MCF 10A (cell line): ENCODE measurements at regions of chr12 and their contacts with region 1.

Region 1: GRCh38 chr12:94644141-94644979 is 6.0 kb downstream of the TMCC3 start:
- DNase-seq: peak; percentile 82
- H3K4me3 Mint-ChIP-seq: peak overlapping the region; percentile 62
- H3K27ac Mint-ChIP-seq: peak overlapping the region; percentile 77
- H3K4me1 Mint-ChIP-seq: peaks cover 31% of the 10 kb centered on the region
- H3K27me3 Mint-ChIP-seq: no peaks in the 10 kb centered on the region
- CTCF ChIP-seq: no peak

Region 2: DNA sequence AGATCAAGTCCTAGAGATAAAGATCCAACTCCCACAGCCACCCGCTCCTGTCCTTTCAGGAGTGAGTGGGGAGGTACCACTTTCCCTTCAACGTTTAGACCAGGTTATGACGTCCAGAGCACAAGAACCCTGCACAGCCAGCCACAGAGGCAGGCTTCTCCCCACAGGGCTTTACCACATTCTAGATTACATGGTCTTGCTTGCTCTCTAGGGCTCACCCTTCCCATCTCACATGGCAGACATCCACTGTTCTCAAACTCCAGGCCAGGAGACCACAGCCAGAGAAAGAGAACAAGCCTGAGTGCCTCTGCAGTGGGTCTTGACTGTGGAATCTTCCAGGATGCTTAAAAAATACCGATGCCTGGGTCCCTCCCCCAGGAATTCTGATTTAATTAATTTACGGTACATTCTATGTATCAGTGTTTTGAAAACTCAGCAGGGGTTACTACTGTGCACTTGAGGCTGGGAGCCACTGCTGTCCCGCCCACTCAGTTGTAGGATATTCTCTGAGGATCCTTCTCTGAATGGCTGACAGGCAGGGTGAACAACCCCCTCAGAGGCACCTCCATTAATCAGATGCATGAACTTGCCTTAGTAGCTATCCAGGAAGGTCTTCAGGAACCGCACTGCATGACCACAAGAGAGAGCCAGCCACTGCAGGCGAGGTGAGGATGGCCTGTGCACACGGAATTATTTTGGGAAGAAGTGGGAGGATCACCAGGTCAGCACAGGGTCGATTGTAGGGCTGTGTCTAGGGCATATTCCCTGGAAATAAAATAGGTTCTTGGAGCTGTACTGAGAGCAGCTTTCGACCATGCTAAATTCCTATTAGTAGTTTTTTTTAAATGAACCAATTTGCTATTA is 1093.4 kb before region 1 on chr12:
- CTCF ChIA-PET with region 1: no interaction called
- POLR2A ChIA-PET with region 1: no interaction called
- intact Hi-C with region 1: no loop called
- DNase-seq: no peak
- H3K4me3 Mint-ChIP-seq: no peak overlapping the region
- H3K27ac Mint-ChIP-seq: no peak overlapping the region
- H3K4me1 Mint-ChIP-seq: no peaks in the 10 kb centered on the region
- H3K27me3 Mint-ChIP-seq: no peaks in the 10 kb centered on the region
- CTCF ChIP-seq: no peak

Region 3: DNA sequence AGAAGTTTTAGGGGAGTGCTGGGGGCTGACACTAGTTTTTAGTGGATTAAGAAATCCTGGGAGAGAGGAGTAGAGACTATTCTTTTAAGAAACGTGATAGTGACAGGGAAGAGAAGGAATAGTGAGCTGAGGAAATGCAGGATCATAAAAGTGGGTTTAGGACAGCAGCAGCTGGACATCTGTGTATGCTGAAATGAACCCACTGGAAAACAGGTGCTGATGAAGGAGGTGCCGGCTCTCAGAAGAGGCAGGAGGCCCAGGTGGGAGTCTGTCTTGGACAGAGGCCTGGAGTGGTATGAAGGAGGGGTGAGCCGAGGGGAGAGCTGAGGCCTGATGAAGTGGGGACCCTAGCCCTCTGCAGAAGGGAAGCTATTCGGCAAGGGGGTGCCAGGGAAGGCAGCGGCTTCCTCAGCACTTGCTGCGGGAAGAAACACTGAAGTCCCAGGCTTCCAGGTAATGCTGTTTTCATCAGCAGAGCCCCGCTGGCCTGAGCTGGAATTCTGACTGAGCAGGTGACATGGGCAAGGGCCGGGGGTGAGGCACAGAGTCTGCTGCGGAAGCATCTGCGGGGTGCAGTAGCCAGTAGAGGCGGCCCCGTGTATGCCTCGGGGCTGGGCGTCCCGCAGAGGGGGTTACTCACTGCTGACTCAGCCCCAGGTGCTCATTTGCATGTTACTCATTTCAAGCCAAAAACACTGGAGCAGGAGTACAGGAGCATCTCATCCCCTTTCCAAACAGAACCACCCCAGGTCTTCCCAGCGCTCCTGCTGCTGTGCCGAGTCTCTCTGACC is 83.7 kb before region 1 on chr12:
- CTCF ChIA-PET with region 1: no interaction called
- POLR2A ChIA-PET with region 1: interaction called, 6 read pairs
- intact Hi-C with region 1: loop called (anchors 2 kb)
- DNase-seq: peak; percentile 93
- H3K4me3 Mint-ChIP-seq: peak overlapping the region; percentile 47
- H3K27ac Mint-ChIP-seq: peak overlapping the region; percentile 90
- H3K4me1 Mint-ChIP-seq: peaks cover 26% of the 10 kb centered on the region
- H3K27me3 Mint-ChIP-seq: no peaks in the 10 kb centered on the region
- CTCF ChIP-seq: no peak

Region 4: DNA sequence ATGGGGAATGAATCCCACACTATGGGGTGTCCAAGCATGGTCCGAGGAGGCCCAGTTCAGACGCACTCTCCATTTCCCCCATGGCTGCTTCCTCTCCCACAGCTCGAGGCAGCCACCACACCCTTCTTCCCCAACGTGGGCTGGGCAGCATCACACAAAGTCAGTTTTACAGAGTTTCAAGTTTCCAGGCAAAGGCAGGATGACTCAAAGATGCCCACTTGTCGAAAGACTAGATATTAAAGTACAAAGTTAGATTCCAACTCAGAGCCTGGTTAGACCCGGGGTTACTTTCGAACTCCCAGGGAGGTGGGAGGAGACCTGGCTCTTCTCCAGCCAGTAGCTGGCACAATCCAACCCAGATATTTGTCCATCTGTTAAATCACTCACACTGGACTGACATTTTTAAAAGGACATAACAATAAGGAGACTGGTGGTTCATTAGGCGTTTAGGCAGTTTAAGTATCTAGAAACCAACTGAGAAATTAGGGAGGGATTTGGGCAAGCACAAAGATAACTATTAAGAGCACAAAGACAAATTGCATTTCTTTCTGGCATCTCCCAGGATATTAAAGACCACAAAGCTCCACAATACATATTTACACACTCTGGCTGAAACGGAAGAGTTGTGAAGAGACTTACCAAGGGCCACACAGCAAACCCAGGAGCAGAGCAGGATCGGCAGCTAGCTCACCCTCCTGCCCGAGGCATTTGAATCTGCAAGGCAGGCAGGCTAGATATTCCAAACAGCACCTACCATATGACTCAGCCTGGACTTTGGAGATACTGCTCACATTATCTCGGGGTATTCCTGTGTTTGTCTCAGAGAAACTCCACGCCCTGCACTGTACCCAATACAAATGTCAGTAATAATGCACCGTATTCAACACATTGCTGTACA is 28.8 kb before region 1 on chr12:
- CTCF ChIA-PET with region 1: no interaction called
- POLR2A ChIA-PET with region 1: interaction called, 4 read pairs
- intact Hi-C with region 1: loop called (anchors 1 kb)
- DNase-seq: peak; percentile 88
- H3K4me3 Mint-ChIP-seq: no peak overlapping the region
- H3K27ac Mint-ChIP-seq: no peak overlapping the region
- H3K4me1 Mint-ChIP-seq: peaks cover 5% of the 10 kb centered on the region
- H3K27me3 Mint-ChIP-seq: no peaks in the 10 kb centered on the region
- CTCF ChIP-seq: no peak

Region 5: DNA sequence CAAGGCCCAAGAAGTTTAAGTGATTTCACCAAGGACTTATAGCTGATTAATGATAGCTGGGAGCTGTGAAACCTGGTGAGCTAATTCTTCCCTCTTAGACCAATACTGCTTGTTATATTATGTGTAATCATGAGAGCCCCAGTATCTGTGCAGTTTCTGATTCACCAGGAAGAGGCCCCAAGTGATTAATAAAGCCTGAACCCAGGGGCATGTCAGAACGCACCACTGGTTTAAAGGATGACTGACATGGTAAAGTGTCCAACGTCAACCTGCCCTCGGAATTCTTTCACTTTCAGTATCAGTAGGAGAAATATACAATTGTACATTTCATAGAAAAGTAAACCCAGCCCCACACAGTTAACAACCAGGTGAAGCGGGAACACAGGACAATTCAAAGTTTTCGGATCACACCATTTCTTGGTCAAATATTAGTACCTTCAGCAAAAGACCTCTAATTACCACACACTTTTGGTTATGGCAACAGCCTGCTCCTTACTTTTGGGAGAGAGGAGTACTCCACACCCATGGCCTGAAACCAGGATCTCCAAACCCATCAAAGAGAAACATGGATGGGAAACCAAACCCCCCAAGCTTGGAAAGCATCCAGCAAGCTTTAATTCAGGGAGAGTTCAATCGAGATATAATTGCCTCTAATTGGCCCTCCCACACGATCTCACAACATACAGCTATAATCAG is 22.5 kb before region 1 on chr12:
- CTCF ChIA-PET with region 1: interaction called, 4 read pairs
- POLR2A ChIA-PET with region 1: interaction called, 11 read pairs
- intact Hi-C with region 1: loop called (anchors 1 kb)
- DNase-seq: peak; percentile 93
- H3K4me3 Mint-ChIP-seq: peak overlapping the region; percentile 69
- H3K27ac Mint-ChIP-seq: peak overlapping the region; percentile 97
- H3K4me1 Mint-ChIP-seq: peaks cover 14% of the 10 kb centered on the region
- H3K27me3 Mint-ChIP-seq: no peaks in the 10 kb centered on the region
- CTCF ChIP-seq: no peak

Region 6: GRCh38 chr12:94725375-94726168 is 81.2 kb after region 1 on chr12:
- CTCF ChIA-PET with region 1: no interaction called
- POLR2A ChIA-PET with region 1: interaction called, 3 read pairs
- intact Hi-C with region 1: loop called (anchors 2 kb)
- DNase-seq: peak; percentile 70
- H3K4me3 Mint-ChIP-seq: no peak overlapping the region
- H3K27ac Mint-ChIP-seq: no peak overlapping the region
- H3K4me1 Mint-ChIP-seq: no peaks in the 10 kb centered on the region
- H3K27me3 Mint-ChIP-seq: no peaks in the 10 kb centered on the region
- CTCF ChIP-seq: peak; percentile 49

Region 7: DNA sequence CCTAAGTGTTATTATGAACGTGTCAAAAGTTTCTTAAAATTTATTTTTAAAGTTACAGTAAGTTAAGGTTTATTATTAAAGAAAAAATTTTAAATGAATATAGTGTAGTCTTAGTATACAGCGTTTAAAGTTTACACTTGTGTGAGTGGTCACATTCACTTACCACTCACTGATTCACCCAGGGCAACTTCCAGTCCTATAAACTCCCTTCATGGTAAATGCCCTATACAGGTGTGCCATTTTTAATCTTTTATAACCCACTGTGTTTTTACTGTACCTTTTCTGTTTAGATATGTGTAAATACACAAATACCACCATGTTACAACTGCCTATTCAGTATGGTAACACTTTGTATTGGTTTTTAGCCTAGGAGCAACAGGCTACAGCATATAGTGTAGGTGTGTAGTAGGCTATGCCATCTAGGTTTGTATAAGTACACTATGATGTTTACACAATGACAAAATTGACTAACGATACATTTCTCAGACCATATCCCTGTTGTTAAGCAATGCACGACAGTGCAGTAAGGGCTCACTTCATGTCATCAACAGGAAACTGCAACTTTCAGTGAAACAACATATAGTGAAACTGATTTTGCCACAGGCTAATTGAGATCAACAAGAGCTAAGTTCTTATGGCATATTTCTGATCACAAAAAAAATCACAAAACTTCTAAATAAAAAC is 118.0 kb after region 1 on chr12:
- CTCF ChIA-PET with region 1: no interaction called
- POLR2A ChIA-PET with region 1: interaction called, 4 read pairs
- intact Hi-C with region 1: loop called (anchors 5 kb)
- DNase-seq: peak; percentile 50
- H3K4me3 Mint-ChIP-seq: no peak overlapping the region
- H3K27ac Mint-ChIP-seq: peak overlapping the region; percentile 92
- H3K4me1 Mint-ChIP-seq: peaks cover 7% of the 10 kb centered on the region
- H3K27me3 Mint-ChIP-seq: no peaks in the 10 kb centered on the region
- CTCF ChIP-seq: no peak

Region 8: GRCh38 chr12:94831081-94831751 is 186.9 kb after region 1 on chr12:
- CTCF ChIA-PET with region 1: no interaction called
- POLR2A ChIA-PET with region 1: no interaction called
- intact Hi-C with region 1: no loop called
- DNase-seq: no peak
- H3K4me3 Mint-ChIP-seq: no peak overlapping the region
- H3K27ac Mint-ChIP-seq: no peak overlapping the region
- H3K4me1 Mint-ChIP-seq: peaks cover 12% of the 10 kb centered on the region
- H3K27me3 Mint-ChIP-seq: no peaks in the 10 kb centered on the region
- CTCF ChIP-seq: no peak